CD4-positive, alpha-beta memory T cell (primary cell): ENCODE measurements at regions of chr6 and their contacts with region 1.

Region 1: DNA sequence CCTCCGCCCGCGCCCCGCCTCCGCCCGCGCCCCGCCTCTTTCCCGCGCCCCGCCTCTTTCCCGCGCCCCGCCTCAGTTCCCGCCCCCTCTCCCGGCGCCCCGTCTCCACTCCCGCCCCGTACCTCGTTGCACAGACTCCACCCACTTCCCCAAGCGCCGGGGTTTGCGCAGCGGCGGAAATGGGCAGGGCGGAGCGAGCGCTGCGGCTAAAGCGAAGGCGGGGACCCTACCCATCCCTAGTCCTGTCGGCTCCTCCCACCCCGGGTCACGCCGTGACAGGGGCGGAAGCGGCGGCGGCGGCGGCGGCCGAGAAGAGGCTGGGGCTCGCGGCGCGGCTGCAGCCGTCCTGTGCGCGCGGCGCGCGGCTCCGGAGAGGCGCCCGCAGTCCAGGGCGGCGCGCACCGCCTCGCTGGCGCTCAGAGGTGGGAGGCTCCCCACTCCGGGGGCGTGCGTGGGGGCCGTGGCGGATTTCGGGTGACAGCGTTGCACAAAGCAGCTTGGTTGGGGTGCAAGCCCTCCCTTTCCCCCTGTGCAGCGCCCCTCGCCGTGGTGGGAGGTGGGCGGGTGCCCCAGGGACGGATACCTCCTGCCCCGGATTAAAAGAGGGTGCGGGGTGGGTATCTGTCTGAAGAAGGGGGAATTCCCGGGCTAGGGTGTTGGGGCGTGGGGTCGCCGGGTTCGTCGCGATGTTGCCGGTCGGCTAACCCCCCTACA is at the start of gene KDM1B:
- DNase-seq: peak; percentile 98 to 100 (median 99)
- H3K4me3 ChIP-seq: peak within 1 kb of the TSS; percentile 92 to 98
- H3K4me3 Mint-ChIP-seq: peak within 1 kb of the TSS; percentile 98 to 99 (median 99)
- H3K27ac ChIP-seq: peak within 1 kb of the TSS; percentile 83
- H3K27ac Mint-ChIP-seq: peak within 1 kb of the TSS; percentile 84 to 100 (median 99)
- H3K4me1 ChIP-seq: peaks cover 29% of the 10 kb centered on the region
- H3K4me1 Mint-ChIP-seq: peaks cover 17 to 36% (median 28%) of the 10 kb centered on the region in 4 donors
- H3K27me3 ChIP-seq: no peaks in the 10 kb centered on the region
- H3K27me3 Mint-ChIP-seq: no peaks in the 10 kb centered on the region
- total RNA-seq, gene KDM1B: 12.0 to 12.3 TPM

Region 2: DNA sequence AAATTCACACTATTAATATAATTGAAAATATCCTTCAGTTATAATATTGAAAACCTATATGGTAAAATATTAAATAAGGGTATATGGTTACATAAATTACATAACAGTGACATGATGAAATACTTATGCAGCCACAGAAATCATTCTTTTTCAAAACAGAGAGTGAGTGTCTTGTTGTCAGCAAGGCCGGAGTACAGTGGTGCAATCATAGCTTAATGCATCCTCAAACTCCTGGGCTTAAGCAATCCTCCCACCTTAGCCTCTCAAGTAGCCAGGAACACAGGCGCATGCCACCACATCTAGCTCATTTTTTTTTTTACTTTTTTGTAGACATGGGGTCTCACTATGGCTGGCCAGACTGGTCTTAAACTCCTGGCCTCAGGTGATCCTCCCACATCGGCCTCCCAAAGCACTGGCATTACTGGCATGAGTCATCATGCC is 514.8 kb before region 1 on chr6:
- CTCF ChIA-PET with region 1: no interaction called
- POLR2A ChIA-PET with region 1: no interaction called
- intact Hi-C with region 1: no loop called
- DNase-seq: no peak
- H3K4me3 ChIP-seq: no peak overlapping the region
- H3K4me3 Mint-ChIP-seq: no peak overlapping the region
- H3K27ac ChIP-seq: no peak overlapping the region
- H3K27ac Mint-ChIP-seq: peak overlapping the region in 4 of 7 donors; percentile 11 to 76 (median 32)
- H3K4me1 ChIP-seq: peaks cover 5% of the 10 kb centered on the region
- H3K4me1 Mint-ChIP-seq: peaks cover 17 to 25% (median 18%) of the 10 kb centered on the region in 4 donors
- H3K27me3 ChIP-seq: no peaks in the 10 kb centered on the region
- H3K27me3 Mint-ChIP-seq: no peaks in the 10 kb centered on the region

Region 3: DNA sequence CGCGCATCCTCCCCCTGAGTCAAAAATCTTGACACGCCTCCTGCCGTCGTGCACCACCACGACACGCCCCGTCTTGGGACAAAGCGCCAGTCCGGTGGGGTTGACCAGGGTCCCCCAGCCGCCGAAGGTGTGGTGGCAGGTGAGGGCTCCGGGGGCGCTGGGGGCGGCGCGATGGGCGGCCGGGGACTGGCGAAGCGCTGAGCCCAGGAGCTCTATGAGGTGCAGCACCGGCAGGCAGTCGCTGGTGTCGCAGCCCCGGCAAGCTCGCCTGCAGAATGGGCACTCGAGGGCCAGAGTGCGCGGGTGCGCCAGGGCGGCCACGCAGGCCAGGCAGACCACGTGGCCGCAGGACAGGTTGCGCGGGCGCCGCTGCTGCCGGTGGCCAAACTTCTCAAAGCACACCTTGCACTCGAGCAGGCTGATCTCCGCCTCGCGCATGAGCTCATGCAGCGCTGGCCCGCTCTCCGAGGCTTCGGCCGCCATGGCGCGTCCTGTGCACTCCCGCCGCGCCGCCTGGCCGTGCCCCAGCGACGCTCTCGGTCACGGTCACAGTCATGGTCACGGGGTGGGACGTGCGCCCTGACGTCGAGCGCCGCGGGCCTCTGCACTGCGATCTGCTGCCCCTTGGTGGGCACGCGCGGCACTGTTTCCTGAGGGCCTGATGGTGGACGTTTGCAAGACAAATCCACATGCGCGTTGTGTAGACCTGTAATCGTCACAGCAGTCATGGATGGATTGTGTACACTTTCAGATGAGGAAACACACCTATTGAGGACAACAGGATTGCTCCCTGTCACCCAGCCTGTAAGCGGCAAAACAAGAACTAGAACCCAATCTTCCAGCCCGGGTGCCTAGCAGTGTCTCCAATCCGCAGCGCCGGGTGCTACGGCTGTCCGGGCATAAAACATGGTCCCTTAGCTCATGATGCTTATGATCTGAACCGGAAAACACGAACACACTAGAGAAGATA is 32.9 kb before region 1 on chr6 and contains the start of gene NHLRC1:
- CTCF ChIA-PET with region 1: interaction called, 4 read pairs
- POLR2A ChIA-PET with region 1: interaction called, 13 read pairs
- intact Hi-C with region 1: no loop called
- DNase-seq: peak; percentile 44 to 69 (median 57)
- H3K4me3 ChIP-seq: peak within 1 kb of the TSS; percentile 26 to 37
- H3K4me3 Mint-ChIP-seq: peak within 1 kb of the TSS; percentile 75 to 91 (median 82)
- H3K27ac ChIP-seq: no peak within 1 kb of the TSS
- H3K27ac Mint-ChIP-seq: peak within 1 kb of the TSS in 4 of 7 donors; percentile 18 to 90 (median 31)
- H3K4me1 ChIP-seq: peaks cover 8% of the 10 kb centered on the region
- H3K4me1 Mint-ChIP-seq: peaks cover 5 to 17% (median 10%) of the 10 kb centered on the region in 4 donors
- H3K27me3 ChIP-seq: no peaks in the 10 kb centered on the region
- H3K27me3 Mint-ChIP-seq: peaks cover 1 to 9% of the 10 kb centered on the region in 2 donors
- total RNA-seq, gene NHLRC1: 1.1 TPM

Region 4: DNA sequence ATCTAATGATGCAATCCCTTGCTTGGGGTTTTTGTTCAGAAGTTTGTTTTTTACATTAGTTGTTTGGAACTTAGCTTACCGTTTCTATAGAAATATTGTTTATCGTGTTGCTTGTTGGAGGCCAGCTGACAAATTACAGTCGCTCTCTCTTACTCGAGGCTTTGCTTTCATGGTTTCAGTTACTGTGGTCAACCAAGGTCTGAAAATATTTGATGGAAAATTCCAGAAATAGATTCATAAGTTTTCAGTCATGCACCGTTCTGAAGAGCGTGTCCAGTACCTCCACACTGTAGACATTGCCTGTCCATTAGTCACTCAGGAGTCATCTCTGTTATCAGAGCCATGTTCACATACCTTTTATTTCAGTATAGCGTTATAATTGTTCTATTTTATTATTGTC is 61.1 kb after region 1 on chr6:
- CTCF ChIA-PET with region 1: no interaction called
- POLR2A ChIA-PET with region 1: no interaction called
- intact Hi-C with region 1: no loop called
- DNase-seq: no peak
- H3K4me3 ChIP-seq: no peak overlapping the region
- H3K4me3 Mint-ChIP-seq: no peak overlapping the region
- H3K27ac ChIP-seq: no peak overlapping the region
- H3K27ac Mint-ChIP-seq: peak overlapping the region in 2 of 7 donors; percentile 22 to 32
- H3K4me1 ChIP-seq: no peaks in the 10 kb centered on the region
- H3K4me1 Mint-ChIP-seq: peaks cover 13 to 25% (median 17%) of the 10 kb centered on the region in 4 donors
- H3K27me3 ChIP-seq: no peaks in the 10 kb centered on the region
- H3K27me3 Mint-ChIP-seq: no peaks in the 10 kb centered on the region

Region 5: DNA sequence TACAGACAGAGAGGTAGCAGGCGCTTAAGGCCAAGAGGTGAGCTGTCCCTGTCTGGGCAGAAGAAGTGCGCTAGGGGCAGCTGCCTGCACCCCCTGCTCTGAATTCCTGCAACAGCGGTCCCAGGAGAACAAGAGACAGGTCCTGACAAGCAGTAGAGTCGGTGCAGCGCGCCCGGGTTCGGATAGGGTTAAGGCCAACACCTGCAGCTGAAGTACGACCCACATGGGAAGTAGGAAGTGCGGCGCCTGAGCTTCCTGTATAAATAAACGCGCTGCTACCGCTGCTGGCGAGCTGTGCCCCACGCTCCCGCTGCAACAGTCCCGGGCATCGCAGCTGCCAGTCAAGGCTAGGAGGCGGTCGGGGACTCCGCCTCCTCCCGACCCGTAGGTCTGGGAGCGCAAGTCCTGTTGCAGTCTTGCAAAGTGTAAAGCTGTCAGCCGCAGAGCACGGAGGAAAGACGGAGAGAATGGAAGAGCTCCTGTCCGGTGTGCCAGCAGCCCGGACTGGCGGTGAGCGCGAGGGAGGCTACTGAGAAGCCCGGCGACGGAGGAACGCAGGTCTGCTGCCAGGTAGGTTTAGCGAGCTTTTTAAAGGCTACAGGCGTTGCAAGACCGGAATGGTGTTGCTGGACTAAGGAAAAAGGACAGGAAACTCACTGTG is 231.9 kb after region 1 on chr6 and contains the start of gene RNF144B:
- CTCF ChIA-PET with region 1: no interaction called
- POLR2A ChIA-PET with region 1: interaction called, 11 read pairs
- intact Hi-C with region 1: loop called (anchors 1 kb)
- DNase-seq: peak; percentile 54 to 70 (median 58)
- H3K4me3 ChIP-seq: peak within 1 kb of the TSS; percentile 65 to 95
- H3K4me3 Mint-ChIP-seq: peak within 1 kb of the TSS; percentile 95 to 100 (median 99)
- H3K27ac ChIP-seq: peak within 1 kb of the TSS; percentile 43
- H3K27ac Mint-ChIP-seq: peak within 1 kb of the TSS; percentile 61 to 92 (median 87)
- H3K4me1 ChIP-seq: peaks cover 24% of the 10 kb centered on the region
- H3K4me1 Mint-ChIP-seq: peaks cover 18 to 33% (median 23%) of the 10 kb centered on the region in 4 donors
- H3K27me3 ChIP-seq: no peaks in the 10 kb centered on the region
- H3K27me3 Mint-ChIP-seq: peaks cover 0 to 3% of the 10 kb centered on the region in 2 donors
- total RNA-seq, gene RNF144B: 3.2 to 5.8 TPM